Activated CD4-positive, alpha-beta T cell treated with anti-CD3 and anti-CD28 coated beads for 36 hours (primary cell): ENCODE measurements at regions of chr7 and their contacts with region 1.

Region 1: GRCh38 chr7:99296471-99296870 is 23.8 kb downstream of the MYH16 start:
- DNase-seq: no peak
- ATAC-seq: no peak
- H3K4me3 Mint-ChIP-seq: no peak overlapping the region
- H3K27ac Mint-ChIP-seq: no peak overlapping the region
- H3K4me1 Mint-ChIP-seq: no peaks in the 10 kb centered on the region
- H3K27me3 Mint-ChIP-seq: no peaks in the 10 kb centered on the region

Region 2: GRCh38 chr7:99171731-99172130 is 124.7 kb before region 1 on chr7:
- CTCF ChIA-PET with region 1: no interaction called
- POLR2A ChIA-PET with region 1: no interaction called
- intact Hi-C with region 1: loop called in 1 of 2 experiments (anchors 5 kb)
- DNase-seq: no peak
- ATAC-seq: no peak
- H3K4me3 Mint-ChIP-seq: no peak overlapping the region
- H3K27ac Mint-ChIP-seq: no peak overlapping the region
- H3K4me1 Mint-ChIP-seq: no peaks in the 10 kb centered on the region
- H3K27me3 Mint-ChIP-seq: peaks cover 5% of the 10 kb centered on the region

Region 3: GRCh38 chr7:99258501-99258900 is 38.0 kb before region 1 on chr7:
- CTCF ChIA-PET with region 1: no interaction called
- POLR2A ChIA-PET with region 1: no interaction called
- intact Hi-C with region 1: no loop called
- DNase-seq: no peak
- ATAC-seq: no peak
- H3K4me3 Mint-ChIP-seq: no peak overlapping the region
- H3K27ac Mint-ChIP-seq: no peak overlapping the region
- H3K4me1 Mint-ChIP-seq: no peaks in the 10 kb centered on the region
- H3K27me3 Mint-ChIP-seq: no peaks in the 10 kb centered on the region

Region 4: DNA sequence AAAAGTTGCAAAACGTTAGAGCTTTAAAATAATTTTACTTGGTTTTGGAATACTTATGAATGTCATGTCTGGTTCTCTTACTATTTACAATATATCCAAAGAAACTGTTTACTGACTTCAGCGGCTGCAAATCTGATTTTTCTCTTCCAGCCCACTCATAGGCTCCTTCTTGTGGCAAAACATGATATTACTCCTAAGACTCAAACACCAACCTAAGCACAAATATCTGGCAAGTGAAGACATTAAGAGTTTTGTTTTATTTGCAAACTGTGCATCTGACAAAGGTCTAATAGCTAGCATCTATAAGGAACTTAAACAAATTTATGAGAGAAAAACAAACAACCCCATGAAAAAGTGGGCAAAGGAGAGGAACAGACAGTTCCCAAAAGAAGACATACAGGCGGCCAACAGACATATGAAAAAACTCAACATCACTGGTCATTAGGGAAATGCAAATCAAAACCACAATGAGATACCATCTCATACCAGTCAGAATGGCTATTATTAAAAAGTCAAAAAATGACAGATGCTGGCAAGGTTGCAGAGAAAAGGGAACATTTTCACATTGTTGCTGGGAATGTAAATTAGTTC is 653.3 kb after region 1 on chr7:
- CTCF ChIA-PET with region 1: no interaction called
- POLR2A ChIA-PET with region 1: no interaction called
- intact Hi-C with region 1: no loop called
- DNase-seq: no peak
- ATAC-seq: no peak
- H3K4me3 Mint-ChIP-seq: no peak overlapping the region
- H3K27ac Mint-ChIP-seq: no peak overlapping the region
- H3K4me1 Mint-ChIP-seq: peaks cover 9% of the 10 kb centered on the region
- H3K27me3 Mint-ChIP-seq: peaks cover 6% of the 10 kb centered on the region